PC-9 (cell line): ENCODE measurements at regions of chr20 and their contacts with region 1.

Region 1: DNA sequence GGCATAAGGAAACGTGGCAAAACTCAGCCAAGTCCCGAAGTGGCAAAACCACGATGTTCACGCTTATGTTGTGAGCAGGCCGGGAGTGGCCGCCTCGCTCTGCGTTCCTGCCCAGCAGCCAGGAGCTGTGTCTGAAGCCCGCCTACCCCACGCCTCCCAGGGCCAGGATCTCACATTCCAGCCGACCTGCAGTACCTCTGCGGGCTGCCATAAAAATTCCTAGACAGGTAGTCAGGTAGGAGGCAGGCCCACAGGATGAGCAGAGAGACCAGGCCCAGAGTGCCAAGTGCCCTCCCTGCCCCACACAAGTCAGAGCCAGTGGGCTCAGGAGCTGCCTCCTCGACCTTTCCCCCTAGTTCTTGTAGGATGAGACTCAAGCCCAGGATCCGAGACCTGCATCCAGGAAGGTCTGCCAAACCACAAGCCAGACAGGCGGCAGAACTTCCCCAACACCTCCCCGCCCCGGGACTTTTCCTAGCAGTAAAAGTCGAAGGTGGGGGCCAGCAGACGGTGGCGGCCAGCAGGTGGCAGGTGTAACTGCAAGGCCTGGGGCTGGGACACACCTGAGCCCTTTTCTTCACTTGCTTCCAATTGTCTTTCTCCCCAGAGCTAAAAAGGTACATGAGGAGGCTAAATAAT is 16.7 kb downstream of the PMEPA1 start:
- DNase-seq: peak; percentile 98 to 100
- H3K4me3 ChIP-seq: peak overlapping the region; percentile 38; the same call in 1 of the 2 replicates
- H3K27ac ChIP-seq: peak overlapping the region; percentile 96
- H3K4me1 ChIP-seq: peaks cover 96% of the 10 kb centered on the region
- H3K27me3 ChIP-seq: no peaks in the 10 kb centered on the region
- CTCF ChIP-seq: peak; percentile 77

Region 2: DNA sequence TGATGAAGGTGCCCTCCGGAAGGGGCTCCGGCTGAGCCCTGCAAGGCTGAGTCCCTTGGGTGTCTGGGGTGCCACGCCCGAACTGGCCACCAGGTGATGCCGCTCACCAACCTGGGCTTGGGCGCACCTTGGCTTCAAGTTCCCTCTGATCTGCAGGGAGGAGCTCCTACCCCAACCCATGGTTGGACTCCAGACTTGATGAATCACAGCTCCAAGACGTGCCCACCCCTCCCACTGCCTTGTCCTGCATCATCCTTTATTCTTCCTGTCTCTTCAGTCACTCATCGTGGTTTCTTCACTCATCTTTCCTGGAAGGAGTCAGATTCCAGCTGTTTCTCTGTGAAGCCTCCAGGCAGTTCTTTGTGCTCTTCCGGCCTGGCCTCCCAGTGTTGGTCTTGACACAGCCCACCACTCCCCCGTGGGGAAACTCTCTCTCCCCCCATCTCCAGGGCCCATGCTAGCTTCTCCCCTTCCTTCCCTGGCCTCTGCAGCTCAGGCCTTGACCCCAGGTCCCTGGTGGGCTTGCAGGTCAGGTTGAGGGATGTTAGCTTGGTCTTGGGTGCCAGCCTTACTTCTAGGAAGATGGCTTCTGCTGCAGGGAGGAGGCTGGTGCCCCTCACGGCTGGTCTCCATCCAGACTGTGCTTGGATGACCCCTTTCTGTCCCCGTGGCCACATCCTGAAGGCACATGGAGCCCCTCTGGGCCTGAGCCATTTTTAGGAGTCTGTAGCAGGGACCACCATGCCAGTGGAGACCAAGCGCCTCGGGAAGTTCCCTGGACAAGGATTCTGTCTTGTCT is 70.3 kb before region 1 on chr20:
- CTCF ChIA-PET with region 1: interaction called, 3 read pairs
- POLR2A ChIA-PET with region 1: no interaction called
- intact Hi-C with region 1: loop called (anchors 2 kb)
- DNase-seq: peak; percentile 83 to 90
- H3K4me3 ChIP-seq: no peak overlapping the region
- H3K27ac ChIP-seq: no peak overlapping the region
- H3K4me1 ChIP-seq: peaks cover 24% of the 10 kb centered on the region
- H3K27me3 ChIP-seq: no peaks in the 10 kb centered on the region
- CTCF ChIP-seq: peak; percentile 99

Region 3: DNA sequence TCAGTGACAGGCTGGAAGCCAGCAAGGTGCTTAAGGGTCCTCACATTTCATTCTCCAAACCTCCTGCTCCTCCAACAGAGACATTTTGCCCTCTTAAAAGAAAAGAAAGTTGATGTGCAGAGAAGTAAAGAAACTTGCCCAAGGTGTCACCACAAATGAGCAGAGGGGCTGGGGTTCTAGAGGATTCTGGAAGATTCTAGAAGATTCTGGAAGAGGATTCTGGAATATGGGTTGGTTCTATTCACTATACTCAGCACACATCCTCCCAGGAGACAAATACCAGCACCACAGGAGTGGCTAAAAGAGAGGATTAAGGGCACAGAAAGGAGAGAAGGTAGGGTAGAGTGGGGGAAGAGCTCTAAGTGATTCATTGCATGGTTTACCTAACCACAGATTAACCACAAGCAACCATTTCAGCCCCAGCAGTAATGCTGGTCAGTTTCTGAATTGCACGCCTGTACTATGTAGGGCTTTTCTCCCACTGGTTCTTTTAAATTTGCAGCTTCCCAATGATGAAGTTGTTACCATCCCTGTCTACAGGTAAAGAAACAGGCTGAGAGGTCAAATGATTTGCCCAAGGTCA is 209.3 kb after region 1 on chr20:
- CTCF ChIA-PET with region 1: no interaction called
- POLR2A ChIA-PET with region 1: no interaction called
- intact Hi-C with region 1: loop called (anchors 5 kb)
- DNase-seq: peak; percentile 43 to 75
- H3K4me3 ChIP-seq: no peak overlapping the region
- H3K27ac ChIP-seq: no peak overlapping the region
- H3K4me1 ChIP-seq: peaks cover 30% of the 10 kb centered on the region
- H3K27me3 ChIP-seq: no peaks in the 10 kb centered on the region
- CTCF ChIP-seq: peak; percentile 45; the same call in 1 of the 2 replicates

Region 4: GRCh38 chr20:58017237-58017969 is 324.3 kb after region 1 on chr20:
- CTCF ChIA-PET with region 1: no interaction called
- POLR2A ChIA-PET with region 1: interaction called, 3 read pairs
- intact Hi-C with region 1: loop called (anchors 1 kb)
- DNase-seq: peak; percentile 80 to 95
- H3K4me3 ChIP-seq: no peak overlapping the region; the same call in 1 of the 2 replicates
- H3K27ac ChIP-seq: peak overlapping the region; percentile 93
- H3K4me1 ChIP-seq: peaks cover 87% of the 10 kb centered on the region
- H3K27me3 ChIP-seq: no peaks in the 10 kb centered on the region
- CTCF ChIP-seq: no peak

Region 5: DNA sequence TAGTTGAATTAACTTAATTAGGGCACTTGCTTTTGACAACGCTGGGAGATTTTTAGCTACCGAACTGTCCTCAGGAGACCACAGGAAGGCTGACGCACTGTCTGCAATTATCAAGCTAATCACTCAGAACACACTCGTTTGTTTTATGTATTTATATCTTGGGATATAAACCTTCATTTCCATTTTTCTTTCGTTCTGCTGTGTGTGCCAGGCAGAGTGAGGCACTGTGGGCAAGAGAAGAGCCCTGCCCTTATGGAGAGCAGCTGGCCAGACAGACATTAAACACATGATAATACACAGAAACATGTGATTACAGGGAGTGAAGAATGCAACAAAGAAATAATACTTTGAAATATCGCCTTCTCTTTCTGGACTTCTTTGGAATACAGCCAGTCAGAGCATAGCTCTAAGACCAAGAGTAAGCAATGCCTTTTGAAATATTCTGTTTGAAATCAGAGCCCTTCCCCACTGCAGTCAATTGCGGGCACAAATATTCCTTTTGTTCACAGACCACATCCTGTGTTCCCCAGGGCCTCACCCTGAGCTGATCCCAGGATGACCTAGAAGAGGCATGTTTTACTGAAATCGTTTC is 438.5 kb after region 1 on chr20:
- CTCF ChIA-PET with region 1: no interaction called
- POLR2A ChIA-PET with region 1: interaction called, 4 read pairs
- intact Hi-C with region 1: loop called (anchors 1 kb)
- DNase-seq: peak; percentile 73 to 95
- H3K4me3 ChIP-seq: peak overlapping the region; percentile 35; the same call in 1 of the 2 replicates
- H3K27ac ChIP-seq: peak overlapping the region; percentile 87
- H3K4me1 ChIP-seq: peaks cover 97% of the 10 kb centered on the region
- H3K27me3 ChIP-seq: no peaks in the 10 kb centered on the region
- CTCF ChIP-seq: no peak